Brain microvascular endothelial cell (primary cell): ENCODE measurements at regions of chr4 and their contacts with region 1.

Region 1: DNA sequence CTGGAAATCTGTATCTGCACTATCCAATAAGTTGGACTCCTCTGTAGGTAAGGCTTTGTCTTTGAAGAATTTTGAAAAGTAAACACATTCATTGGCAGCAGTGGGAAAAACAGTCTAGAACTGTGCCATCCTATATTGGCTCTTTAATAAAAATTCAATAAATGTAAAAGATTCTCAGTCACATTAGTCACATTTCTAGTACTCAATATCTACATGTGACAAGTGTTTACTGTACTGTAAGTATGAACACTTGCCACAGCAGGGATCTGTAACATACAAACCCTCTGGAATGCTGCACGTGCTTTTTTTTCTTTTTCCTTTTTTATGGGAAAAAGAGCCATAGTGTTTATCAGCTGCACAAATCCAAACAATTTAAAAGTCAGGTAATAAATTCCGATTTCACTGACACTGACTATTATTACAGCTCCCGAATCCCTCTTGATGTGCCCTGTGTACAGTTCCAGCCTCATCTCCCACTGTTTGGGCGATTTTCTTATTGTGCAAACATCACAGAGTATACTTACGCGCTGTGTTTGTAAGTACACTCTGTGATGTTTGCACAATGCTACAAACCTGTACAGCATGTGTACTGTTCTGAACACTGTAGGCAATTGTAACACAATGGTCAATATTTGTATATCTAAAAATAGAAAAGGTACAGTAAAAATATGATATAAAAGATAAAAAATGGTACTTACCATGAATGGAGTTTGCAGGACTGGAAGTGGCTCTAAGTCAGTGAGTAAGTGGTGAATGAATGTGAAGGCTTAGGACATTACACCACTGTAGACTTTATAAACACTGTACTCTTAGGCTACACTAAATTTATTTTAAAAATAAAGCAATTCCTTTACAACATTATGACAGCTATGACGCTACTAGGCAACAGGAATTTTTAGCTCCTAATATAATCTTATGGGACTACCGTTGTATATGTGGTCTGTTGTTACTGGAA is 8.7 kb downstream of the PYURF start:
- DNase-seq: no peak
- H3K4me3 ChIP-seq: no peak overlapping the region
- H3K27ac ChIP-seq: no peak overlapping the region
- H3K27me3 ChIP-seq: no peaks in the 10 kb centered on the region
- CTCF ChIP-seq: no peak

Region 2: GRCh38 chr4:88211473-88212252 is 303.2 kb before region 1 on chr4:
- in situ Hi-C with region 1: loop called (anchors 10 kb)
- DNase-seq: peak; percentile 65
- H3K4me3 ChIP-seq: no peak overlapping the region
- H3K27ac ChIP-seq: no peak overlapping the region
- H3K27me3 ChIP-seq: no peaks in the 10 kb centered on the region
- CTCF ChIP-seq: peak; percentile 53

Region 3: DNA sequence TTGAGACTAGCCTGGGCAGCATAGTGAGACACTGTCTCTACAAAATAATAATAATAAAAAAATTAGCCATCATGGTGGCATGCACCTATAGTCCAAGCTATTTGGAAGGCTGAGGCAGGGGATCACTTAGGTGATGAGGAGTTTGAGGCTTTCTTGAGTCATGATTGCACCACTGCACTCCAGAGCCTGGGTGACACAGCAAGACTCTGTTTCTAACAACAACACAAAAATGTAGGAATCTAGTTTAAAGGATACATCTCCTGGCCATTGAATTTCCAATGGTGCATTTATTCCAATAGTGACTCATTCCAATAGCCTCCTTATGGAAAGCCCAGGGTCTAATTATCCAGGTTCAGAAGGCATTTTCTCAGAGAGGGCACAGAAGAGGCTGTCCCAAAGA is 158.1 kb before region 1 on chr4:
- in situ Hi-C with region 1: no loop called
- DNase-seq: peak; percentile 5
- H3K4me3 ChIP-seq: no peak overlapping the region
- H3K27ac ChIP-seq: no peak overlapping the region
- H3K27me3 ChIP-seq: no peaks in the 10 kb centered on the region
- CTCF ChIP-seq: no peak

Region 4: DNA sequence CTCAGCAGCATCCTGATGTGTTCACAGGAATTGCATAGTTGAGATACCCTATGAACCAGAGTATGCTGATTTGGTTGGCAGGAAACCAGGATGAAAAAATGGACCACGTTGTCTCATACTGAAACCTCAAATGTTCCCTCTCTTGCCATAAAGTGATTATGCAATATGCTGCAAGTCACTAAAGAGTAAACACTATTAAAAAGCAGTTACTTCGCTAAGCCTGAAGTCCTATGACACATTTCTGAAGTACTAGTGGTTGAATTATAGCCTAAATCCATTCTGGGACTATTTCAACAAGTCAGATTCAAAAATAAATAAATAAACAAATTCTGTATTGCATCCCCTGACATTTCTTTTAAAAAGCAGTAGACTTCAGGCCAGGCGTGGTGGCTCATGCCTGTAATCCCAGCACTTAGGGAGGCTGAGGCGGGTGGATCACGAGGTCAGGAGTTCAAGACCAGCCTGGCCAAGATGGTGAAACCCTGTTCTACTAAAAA is 288.8 kb after region 1 on chr4:
- in situ Hi-C with region 1: no loop called
- DNase-seq: peak; percentile 90
- H3K4me3 ChIP-seq: no peak overlapping the region
- H3K27ac ChIP-seq: peak overlapping the region; percentile 37
- H3K27me3 ChIP-seq: no peaks in the 10 kb centered on the region
- CTCF ChIP-seq: no peak